ENCODE measurements at regions of chr5 and their contacts with region 1.

Region 1: DNA sequence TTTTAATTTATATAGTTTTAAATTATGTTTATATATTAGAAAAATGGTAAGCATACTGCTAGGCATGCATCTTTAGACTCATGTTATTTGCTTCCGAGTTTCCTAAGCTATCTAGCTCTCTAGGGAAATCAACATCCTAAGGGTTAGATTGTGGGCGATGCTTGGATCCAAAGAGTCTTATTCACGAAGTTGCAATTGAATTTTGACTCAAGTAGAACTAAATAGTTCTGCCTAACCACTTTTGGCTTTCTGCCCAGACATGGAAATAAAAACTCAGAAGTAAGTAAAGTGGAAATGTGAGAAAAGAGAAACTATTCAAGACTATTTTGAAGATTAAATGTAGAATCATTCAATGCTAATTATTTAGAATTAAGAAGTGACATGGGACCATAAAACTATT is 440.4 kb downstream of the CDH18 start:
- DNase-seq: no peak
- H3K4me3 ChIP-seq: no peak overlapping the region
- H3K27ac ChIP-seq: no peak overlapping the region
- H3K4me1 ChIP-seq: no peaks in the 10 kb centered on the region
- H3K27me3 ChIP-seq: no peaks in the 10 kb centered on the region
- CTCF ChIP-seq: no peak
- EP300 ChIP-seq: no peak
- POLR2A ChIP-seq: no peak

Region 2: DNA sequence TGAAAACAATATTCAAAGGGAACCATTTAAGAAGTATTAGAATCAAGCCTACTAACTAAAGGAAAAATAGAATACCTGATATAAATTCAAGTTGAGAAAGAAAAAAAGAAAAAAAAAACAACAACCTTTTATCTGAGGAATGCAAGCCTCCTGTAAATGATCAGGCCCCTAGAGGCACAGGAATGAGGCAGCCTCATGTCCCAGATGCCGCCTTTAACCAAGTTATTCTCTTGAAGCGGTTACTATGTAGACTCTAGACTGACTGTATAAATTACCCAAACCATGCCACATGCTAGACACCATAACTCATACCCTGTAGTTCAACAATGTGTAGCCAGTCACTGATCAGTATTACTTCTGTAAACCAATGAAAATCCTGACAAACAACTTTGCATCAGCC is 983.8 kb before region 1 on chr5:
- intact Hi-C with region 1: loop called in 1 of 4 experiments (anchors 10 kb)
- DNase-seq: no peak
- H3K4me3 ChIP-seq: no peak overlapping the region
- H3K27ac ChIP-seq: no peak overlapping the region
- H3K4me1 ChIP-seq: no peaks in the 10 kb centered on the region
- H3K27me3 ChIP-seq: no peaks in the 10 kb centered on the region
- CTCF ChIP-seq: no peak
- EP300 ChIP-seq: no peak
- POLR2A ChIP-seq: no peak

Region 3: GRCh38 chr5:19322716-19323485 is 224.7 kb before region 1 on chr5:
- intact Hi-C with region 1: no loop called
- DNase-seq: no peak
- H3K4me3 ChIP-seq: no peak overlapping the region
- H3K27ac ChIP-seq: no peak overlapping the region
- H3K4me1 ChIP-seq: no peaks in the 10 kb centered on the region
- H3K27me3 ChIP-seq: no peaks in the 10 kb centered on the region
- CTCF ChIP-seq: no peak
- EP300 ChIP-seq: no peak
- POLR2A ChIP-seq: no peak

Region 4: DNA sequence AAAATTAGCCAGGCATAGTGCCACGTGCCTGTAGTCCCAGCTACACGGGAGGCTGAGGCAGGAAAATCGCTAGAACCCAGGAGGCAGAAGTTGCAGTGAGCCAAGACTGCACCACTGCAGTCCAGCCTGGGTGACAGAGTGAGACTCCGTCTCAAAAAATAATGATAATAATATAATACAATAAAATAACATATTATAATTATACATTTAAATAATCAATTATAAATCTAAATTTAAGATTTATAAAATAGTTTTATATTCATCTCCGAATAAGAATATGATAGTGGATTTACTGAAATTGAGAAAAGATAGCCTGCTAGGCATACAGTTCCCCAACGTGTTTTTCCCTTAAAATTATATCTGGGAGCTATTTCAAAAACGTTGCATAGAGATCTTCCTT is 159.2 kb before region 1 on chr5:
- intact Hi-C with region 1: no loop called
- DNase-seq: no peak
- H3K4me3 ChIP-seq: no peak overlapping the region
- H3K27ac ChIP-seq: no peak overlapping the region
- H3K4me1 ChIP-seq: no peaks in the 10 kb centered on the region
- H3K27me3 ChIP-seq: no peaks in the 10 kb centered on the region
- CTCF ChIP-seq: no peak
- EP300 ChIP-seq: no peak
- POLR2A ChIP-seq: no peak